Posterior vena cava (tissue), 2 donors: ENCODE measurements at regions of chr1 and their contacts with region 1.

Region 1: DNA sequence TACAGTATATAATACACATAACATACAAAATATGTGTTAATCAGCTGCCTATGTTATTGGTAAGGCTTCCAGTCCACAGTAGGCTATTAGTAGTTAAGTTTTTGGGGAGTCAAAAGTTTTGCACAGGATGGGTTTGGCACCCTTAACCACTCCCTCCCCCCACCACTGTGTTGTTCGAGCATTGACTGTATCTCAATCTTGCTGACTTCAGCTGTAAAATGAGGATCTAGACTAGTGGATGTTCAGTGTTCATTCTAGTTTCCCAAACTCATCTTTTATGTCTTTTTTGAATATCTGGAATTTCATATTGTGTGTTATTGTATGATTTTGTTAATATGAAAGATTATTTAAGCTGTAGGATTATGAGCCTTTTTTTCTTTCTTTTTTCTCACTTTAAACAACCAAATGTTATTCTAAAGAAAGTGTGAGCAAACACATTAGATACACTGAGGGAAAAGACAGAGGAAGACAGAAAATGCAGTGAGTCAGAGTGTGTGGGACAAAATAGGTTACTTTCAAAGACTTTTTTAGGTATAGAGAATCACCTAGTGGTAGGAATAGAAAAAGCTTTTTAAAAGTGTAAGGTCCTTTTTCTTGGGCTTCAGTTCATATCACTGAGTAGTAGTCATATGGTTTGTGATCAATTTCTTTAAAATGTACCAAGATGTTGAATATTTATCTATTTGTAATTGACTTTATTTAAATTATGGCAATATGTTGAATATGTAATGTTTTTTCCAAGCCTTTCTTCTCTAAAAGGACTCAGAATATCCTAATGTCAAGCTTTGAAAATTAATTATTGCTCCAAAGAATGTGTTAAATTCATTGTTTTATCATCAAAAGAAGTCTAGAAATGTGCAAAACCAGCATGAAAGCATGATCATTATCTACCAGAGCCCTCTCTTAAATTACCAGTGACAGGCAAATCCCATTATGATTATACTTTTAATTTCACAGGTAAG is 17.9 kb upstream of the CENPF start:
- DNase-seq: no peak

Region 2: GRCh38 chr1:214328770-214329469 is 256.2 kb before region 1 on chr1:
- intact Hi-C with region 1: loop called (anchors 2 to 10 kb)
- DNase-seq: peak; percentile 89

Region 3: GRCh38 chr1:214386747-214387146 is 198.3 kb before region 1 on chr1:
- intact Hi-C with region 1: loop called in 1 of 2 experiments (anchors 10 kb)
- DNase-seq: no peak